HEK293T (cell line): ENCODE measurements at regions of chr9 and their contacts with region 1.

Region 1: GRCh38 chr9:94681508-94681907 is 42.2 kb upstream of the FBP1 start:
- DNase-seq: peak; percentile 72

Region 2: DNA sequence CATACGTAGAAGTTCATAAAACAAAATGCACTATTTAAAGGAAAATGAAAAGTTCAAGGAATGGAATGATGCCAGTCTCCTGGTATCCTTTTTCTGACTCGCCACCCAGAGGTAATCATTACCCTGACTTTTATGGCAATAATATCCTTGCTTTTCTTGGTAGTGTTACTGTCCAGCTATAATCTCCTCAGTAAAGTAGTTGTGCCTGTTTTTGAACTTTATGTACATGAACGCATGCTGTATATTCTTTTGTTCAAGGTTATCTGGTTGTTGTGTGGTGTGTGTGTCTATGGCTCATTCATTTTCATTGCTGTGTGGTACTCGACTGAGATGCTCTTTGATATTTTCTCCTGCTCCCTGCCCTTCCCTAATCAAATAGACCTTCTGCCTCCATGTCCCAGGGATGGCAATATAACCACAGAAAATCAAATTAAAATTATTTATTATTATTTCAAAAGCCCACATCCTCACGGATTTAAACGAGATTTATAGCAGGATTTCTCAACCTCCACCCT is 13.0 kb before region 1 on chr9:
- CTCF ChIA-PET with region 1: interaction called, 13 read pairs
- POLR2A ChIA-PET with region 1: no interaction called
- DNase-seq: no peak

Region 3: GRCh38 chr9:94973451-94973941 is 292.0 kb after region 1 on chr9:
- CTCF ChIA-PET with region 1: no interaction called
- POLR2A ChIA-PET with region 1: no interaction called
- DNase-seq: no peak

Region 4: DNA sequence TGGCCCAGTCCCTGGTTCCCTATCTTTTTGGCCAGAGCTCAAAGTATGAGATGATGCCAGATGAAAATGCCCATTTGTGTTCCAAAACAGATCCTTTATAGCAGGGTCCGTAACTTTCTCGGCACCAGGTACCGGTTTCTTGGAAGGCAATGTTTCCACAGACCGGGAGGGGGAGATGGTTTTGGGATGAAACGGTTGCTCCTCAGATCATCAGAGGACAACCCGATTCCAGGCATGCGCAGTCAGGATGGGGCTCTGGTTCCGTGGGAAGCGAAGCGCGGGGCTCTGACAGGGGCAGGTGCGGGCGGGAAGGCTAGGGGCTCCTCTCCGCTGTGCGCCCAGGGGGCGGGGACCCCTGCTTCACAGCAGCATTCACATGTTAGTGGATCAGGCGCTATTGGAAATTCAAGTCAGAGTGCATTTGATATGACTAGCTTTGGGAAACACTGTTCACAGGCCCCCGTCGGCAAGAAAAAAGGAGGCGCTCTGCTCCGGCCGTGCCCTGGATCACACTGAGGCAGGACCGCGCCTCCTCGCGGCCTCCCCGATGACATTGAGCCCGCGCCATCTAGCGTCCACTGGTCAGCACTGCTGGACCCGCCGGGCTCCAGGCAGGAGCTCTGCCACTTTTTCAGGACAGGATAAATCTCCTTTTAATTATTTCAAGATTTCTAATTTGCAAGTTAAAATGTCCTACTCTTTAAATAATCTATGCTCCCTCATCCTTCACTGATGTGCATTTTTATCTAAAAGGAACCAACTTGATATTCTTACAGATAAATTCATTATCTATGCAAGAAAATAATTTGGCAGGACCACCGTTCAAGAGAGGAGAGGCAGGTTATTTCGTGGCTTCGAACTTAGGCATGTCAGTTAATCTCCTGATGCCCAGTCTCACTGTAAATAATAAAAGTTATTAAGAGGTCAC is 446.0 kb after region 1 on chr9:
- CTCF ChIA-PET with region 1: interaction called, 11 read pairs
- POLR2A ChIA-PET with region 1: no interaction called
- DNase-seq: peak; percentile 82